Posterior vena cava (tissue), 2 donors: ENCODE measurements at regions of chr11 and their contacts with region 1.

Region 1: GRCh38 chr11:130765951-130766649 is 150.2 kb downstream of the SNX19 start:
- DNase-seq: no peak

Region 2: DNA sequence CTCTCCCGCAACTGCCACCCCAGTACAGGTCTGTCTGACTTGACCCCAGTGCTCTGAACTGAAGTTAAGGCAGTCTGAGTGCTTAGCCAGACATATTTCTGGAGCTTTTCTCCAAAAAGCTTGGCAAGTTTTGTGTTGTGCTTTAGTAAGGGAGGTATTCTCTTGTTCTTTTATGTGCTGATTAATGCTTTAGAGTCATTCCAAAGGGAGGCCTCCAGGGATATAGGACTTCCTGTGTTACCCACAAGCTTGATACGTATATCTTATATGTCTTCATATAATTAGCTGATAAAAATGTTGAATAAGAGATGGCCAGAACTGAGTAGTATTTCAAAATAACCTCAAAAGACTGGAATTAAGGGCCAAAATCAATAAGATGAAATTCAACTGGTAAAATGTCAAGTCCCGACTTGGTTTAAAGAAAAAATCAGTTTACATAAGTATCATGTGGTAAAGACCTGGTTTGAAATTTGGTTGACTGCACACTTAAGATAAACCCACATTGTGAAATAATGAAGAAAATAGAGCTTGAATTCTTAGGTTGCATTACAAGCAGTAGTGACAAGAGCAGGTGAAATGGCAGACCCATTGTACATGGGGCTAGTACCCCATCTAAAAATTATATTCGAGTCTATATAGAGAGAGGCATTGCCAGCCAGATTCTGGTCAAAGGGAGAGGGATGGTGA is 76.7 kb before region 1 on chr11:
- intact Hi-C with region 1: loop called in 1 of 2 experiments (anchors 5 kb)
- DNase-seq: no peak

Region 3: GRCh38 chr11:130737866-130738431 is 28.2 kb before region 1 on chr11:
- intact Hi-C with region 1: no loop called
- DNase-seq: peak; percentile 87